Breast epithelium (tissue), 4 donors: ENCODE measurements at regions of chr11 and their contacts with region 1.

Region 1: DNA sequence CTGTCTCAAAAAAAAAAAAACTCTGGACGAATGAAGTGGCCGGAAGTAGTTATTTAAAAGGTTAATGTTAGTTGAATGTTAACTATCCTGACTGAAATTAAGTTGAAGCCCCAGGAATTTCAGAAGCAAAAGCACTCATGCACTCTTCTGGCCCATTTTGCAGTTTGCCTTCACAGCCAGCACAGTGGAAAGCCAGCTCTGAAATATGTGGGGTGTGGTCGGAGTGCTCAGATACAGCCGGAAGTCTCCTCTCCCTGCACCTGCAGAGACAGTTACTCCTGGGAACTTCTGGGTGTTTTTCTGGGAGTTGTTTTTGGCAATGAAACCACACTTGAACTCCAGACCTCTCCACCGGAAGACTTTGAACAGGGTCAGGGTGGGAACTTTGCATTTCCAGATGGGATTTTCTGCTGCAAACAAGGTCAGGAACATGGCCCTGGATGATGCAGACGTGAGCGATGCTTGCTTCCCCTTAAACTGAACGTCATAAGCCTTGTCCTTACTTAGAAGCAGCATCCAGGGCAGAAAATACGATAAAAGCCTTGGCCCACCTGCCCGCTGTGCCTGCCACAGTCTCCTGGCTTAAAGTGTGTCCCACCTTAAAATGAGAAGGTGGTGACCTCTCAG is 21.5 kb upstream of the CABP2 start:
- DNase-seq: no peak
- H3K4me3 ChIP-seq: no peak overlapping the region
- H3K27ac ChIP-seq: no peak overlapping the region
- H3K4me1 ChIP-seq: no peaks in the 10 kb centered on the region
- H3K27me3 ChIP-seq: no peaks in the 10 kb centered on the region
- CTCF ChIP-seq: no peak
- POLR2A ChIP-seq: no peak

Region 2: GRCh38 chr11:67558084-67558781 is 13.5 kb after region 1 on chr11:
- intact Hi-C with region 1: loop called (anchors 1 kb)
- DNase-seq: no peak
- H3K4me3 ChIP-seq: no peak overlapping the region
- H3K27ac ChIP-seq: no peak overlapping the region
- H3K4me1 ChIP-seq: no peaks in the 10 kb centered on the region
- H3K27me3 ChIP-seq: no peaks in the 10 kb centered on the region
- CTCF ChIP-seq: no peak
- POLR2A ChIP-seq: no peak